ENCODE measurements at regions of chr2 and their contacts with region 1.

Region 1: GRCh38 chr2:81658227-81658626 is 1353.7 kb upstream of the LRRTM1 start:
- DNase-seq: no peak
- ATAC-seq: no peak

Region 2: DNA sequence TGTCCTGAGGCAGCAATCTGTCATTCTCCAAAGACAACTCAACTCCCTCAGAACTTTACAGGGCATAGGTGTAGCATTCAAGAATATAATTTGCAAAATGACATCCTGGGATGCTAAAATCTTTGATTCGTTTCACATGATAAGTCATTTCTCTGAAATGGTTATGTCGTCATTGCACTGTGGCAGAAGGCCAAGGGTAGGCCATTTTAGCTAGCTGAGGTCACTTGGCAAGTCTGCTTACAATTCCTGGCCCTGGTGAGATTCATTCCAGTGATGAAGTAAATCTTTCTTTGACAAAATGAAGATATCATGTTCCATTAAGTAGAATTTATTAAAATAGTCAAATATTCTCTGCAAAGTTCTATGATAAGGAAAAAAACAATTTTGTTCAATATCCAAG is 56.6 kb after region 1 on chr2:
- intact Hi-C with region 1: loop called in 1 of 2 experiments (anchors 2 kb)
- DNase-seq: no peak
- ATAC-seq: no peak

Region 3: DNA sequence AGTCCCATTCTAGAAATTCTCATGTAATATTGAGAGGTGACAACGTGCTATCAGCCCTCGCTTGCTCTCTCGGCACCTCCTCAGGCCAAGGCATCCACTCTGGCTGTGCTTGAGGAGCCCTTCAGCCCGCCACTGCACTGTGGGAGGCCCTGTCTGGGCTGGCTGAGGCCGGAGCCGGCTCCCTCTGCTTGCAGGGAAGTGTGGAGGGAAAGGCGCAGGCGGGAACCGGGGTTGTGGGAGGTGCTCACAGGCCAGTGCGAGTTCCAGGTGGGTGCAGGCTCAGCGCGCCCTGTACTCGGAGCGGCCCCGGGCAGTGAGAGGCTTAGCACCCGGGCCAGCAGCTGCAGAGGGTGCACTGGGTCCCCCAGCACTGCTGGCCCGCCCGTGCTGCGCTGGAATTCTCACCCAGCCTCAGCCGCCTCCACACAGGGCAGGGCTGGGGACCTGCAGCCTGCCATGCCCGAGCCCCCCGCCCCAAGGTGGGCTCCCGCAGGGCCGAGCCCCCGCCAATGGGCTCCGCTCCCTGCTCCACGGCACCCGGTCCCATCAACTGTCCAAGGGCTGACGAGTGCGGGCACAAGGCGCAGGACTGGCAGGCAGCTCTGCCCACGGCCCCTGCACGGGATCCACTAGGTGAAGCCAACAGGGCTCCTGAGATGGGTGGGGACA is 326.9 kb after region 1 on chr2:
- intact Hi-C with region 1: no loop called
- DNase-seq: no peak
- ATAC-seq: no peak

Region 4: DNA sequence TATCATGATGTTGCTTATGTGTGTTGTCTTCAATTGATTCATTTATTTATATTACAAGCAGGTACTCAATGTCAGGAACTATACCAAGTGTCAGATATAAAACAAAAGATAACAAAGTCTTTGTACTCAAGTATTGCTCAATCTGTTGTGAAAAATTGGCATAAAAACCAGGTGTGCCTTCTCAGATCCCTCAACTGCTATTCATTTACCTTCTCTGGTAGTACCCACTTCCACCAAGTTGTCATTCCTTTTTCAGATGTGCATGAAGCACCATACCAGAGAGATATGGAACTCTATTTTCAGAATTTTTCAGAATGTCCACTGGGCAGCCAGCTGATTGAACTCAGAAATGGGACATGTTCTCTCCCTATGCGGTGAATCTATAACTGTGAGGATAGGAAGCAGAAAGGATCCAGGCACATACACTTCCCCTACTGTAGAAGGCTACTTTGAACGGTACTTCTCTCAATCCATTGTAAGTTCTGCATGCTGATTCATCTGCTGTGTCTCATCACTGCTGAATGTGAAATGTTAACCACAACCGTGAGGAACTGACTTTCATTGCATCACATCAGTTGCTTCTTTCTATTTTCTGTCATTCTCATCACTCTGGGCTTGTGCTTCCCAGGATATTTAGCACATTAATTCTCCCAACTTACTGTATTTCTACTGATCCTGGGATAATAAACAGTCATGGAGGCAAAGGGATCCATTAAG is 1179.5 kb after region 1 on chr2:
- intact Hi-C with region 1: no loop called
- DNase-seq: no peak
- ATAC-seq: no peak

Measured in left cardiac atrium (tissue), 4 donors.